ENCODE measurements at regions of chr6 and their contacts with region 1.

Region 1: DNA sequence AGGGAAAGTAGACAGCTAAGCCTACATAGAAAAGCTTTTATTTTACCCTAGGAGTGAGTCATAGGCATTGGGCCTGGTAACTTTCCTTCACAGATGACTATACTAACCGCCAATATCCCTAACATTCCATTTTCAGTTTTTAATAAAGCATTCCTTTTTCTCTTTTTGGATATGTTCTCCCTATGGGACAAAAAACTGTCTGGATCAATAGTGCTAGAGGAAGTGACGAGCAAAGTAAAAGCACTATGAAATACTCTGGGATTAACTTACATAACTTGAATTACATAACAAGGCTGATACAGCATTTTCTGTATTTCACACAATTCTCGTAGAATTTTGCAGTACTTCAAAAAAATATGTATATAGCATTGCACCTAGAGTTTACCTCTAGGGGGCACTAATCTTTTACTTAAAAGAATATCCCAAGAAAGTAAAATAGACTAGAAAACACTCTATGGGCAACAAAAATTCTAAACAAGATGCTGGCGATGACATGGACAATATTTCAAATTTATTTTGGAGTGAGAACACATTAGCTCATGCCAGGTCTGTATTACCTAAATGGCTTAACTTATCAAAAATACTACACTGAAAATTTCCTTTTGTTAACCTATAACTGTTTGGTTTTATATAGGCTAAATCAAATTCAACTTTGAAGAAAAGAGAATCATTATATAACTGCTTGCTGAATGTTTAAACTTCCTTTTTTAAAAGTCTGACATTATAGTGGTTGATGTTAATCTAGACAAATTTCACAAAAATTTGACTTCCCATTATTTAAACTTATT is 66.3 kb upstream of the DST start:
- DNase-seq: no peak
- H3K4me3 ChIP-seq: no peak overlapping the region
- CTCF ChIP-seq: no peak

Region 2: DNA sequence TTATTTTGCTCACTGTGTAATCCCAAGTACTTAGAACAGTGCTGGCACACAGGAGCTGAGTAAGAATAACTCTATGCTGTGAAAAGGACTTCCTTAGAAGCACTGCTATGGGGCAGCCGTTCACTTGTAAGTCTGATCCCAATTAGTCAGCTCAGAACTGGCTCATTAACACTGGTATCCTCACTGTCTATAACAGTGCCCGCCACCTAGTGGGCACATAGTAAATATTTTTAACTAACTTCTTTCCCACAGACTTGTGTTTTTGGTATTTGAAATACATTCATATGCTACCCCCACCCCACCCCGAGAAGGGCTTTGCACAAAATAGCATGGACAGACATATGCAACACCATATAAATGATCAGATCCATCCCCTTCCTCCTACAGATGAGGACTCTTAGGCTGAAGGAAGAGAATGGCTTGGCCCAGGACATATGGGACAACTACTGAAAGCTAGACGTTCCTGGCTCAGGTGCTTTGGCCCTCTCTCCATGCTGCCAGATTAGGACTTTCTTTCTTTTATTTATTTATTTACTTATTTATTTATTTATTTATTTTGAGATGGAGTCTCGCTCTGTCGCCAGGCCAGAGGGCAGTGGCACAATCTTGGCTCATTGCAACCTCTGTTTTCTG is 113.4 kb before region 1 on chr6:
- CTCF ChIA-PET with region 1: no interaction called
- POLR2A ChIA-PET with region 1: no interaction called
- DNase-seq: no peak
- H3K4me3 ChIP-seq: no peak overlapping the region
- CTCF ChIP-seq: peak; percentile 32

Region 3: GRCh38 chr6:56693246-56693607 is 15.8 kb before region 1 on chr6:
- CTCF ChIA-PET with region 1: interaction called, 51 read pairs
- POLR2A ChIA-PET with region 1: interaction called, 3 read pairs
- DNase-seq: peak; percentile 90
- H3K4me3 ChIP-seq: no peak overlapping the region
- CTCF ChIP-seq: no peak

Region 4: GRCh38 chr6:56724455-56724854 is 15.5 kb after region 1 on chr6:
- CTCF ChIA-PET with region 1: interaction called, 24 read pairs
- POLR2A ChIA-PET with region 1: no interaction called
- DNase-seq: no peak
- H3K4me3 ChIP-seq: no peak overlapping the region
- CTCF ChIP-seq: no peak

Region 5: DNA sequence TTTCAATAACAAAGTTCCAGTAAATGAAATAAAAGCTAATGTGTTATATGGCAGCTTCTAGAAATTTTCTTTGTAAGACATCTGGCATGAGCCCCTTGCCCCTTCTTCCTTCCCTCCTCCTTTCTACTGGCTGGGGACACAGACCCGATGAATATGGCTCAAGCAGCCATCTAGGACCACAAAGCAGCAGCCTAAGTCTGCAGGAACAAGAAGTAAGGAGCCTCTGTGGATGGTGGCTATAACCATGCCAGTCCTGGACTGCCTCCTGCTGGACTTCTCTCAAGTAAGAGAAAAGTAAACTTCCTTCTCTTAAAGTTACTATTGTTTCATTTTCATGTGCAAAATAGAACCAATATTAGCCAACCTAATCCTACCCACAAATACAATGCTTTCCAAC is 48.6 kb after region 1 on chr6:
- CTCF ChIA-PET with region 1: interaction called, 19 read pairs
- POLR2A ChIA-PET with region 1: no interaction called
- DNase-seq: no peak
- H3K4me3 ChIP-seq: no peak overlapping the region
- CTCF ChIP-seq: peak; percentile 14

Region 6: DNA sequence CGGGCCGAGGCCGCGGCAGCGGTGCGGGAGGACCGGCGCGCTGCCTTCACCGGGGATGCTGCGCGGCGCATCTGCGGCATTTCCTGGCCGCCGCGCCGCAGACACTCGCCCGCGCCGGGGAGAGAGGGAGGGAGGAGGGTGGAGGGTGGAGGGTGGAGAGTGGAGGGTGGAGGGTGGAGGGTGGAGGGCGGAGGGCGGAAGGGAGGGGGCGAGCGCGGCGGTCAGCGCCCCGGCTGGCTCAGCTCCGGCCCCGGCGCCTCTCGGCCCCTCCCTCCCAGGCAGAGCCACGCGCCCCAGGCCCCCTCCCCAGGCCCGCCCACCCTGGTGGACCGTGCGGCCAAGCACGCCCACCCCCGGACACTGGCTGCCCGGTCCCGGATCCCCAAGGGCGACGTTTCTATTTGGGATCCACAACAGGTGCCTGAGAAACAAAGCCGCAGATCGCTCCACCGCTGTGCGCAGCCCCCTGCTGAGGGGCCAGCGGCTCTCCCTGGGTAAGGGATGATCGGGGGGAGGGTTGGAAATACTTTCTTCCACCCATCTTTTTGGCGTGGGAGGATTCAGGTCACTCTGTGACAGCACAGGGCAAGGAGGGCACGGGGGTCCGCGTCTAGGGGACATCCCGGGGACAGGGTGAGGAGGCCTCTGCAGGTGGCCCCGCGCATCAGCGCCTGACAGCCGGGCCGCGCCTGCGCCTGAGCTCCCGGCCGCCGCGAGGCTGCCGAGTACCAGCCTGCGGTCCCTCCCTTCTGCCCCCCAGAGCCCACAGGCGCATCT is 134.8 kb after region 1 on chr6:
- CTCF ChIA-PET with region 1: interaction called, 86 read pairs
- POLR2A ChIA-PET with region 1: interaction called, 3 read pairs
- DNase-seq: no peak
- H3K4me3 ChIP-seq: peak overlapping the region; percentile 75
- CTCF ChIP-seq: peak; percentile 80

Region 7: GRCh38 chr6:56851541-56852259 is 142.7 kb after region 1 on chr6:
- CTCF ChIA-PET with region 1: interaction called, 86 read pairs
- POLR2A ChIA-PET with region 1: no interaction called
- DNase-seq: no peak
- H3K4me3 ChIP-seq: peak overlapping the region; percentile 74
- CTCF ChIP-seq: peak; percentile 60

Measured in AG04449 (cell line).